HEK293 (cell line): ENCODE measurements at regions of chr14 and their contacts with region 1.

Region 1: GRCh38 chr14:23631702-23632460 is 4.3 kb upstream of the DHRS2 start:
- H3K4me3 ChIP-seq: no peak overlapping the region
- H3K27ac ChIP-seq: no peak overlapping the region
- H3K4me1 ChIP-seq: no peaks in the 10 kb centered on the region
- CTCF ChIP-seq: peak; percentile 77

Region 2: DNA sequence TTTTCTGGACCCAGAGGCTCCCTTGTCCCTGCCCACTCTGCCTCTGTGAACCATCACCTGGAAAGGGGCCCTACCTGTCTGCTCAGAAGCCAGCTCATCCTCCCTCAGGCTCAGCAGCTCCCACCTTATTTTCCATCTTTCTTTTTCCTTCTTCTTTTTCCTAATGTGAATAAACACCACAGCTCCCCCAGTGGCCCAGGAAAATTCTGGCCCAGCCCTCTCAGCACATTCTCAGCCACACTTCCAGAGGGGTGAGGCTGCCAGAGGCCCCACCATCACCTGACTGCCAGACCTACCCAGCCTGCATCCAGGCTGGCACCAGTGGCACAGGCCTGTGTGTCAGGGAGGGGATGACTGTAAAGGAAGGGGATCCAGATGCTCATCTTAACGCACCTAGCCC is 103.3 kb before region 1 on chr14:
- CTCF ChIA-PET with region 1: no interaction called
- POLR2A ChIA-PET with region 1: no interaction called
- H3K4me3 ChIP-seq: no peak overlapping the region
- H3K27ac ChIP-seq: no peak overlapping the region
- H3K4me1 ChIP-seq: no peaks in the 10 kb centered on the region
- CTCF ChIP-seq: 0 out of 2 replicates have a peak, but pooled peaks have one; percentile 33

Region 3: DNA sequence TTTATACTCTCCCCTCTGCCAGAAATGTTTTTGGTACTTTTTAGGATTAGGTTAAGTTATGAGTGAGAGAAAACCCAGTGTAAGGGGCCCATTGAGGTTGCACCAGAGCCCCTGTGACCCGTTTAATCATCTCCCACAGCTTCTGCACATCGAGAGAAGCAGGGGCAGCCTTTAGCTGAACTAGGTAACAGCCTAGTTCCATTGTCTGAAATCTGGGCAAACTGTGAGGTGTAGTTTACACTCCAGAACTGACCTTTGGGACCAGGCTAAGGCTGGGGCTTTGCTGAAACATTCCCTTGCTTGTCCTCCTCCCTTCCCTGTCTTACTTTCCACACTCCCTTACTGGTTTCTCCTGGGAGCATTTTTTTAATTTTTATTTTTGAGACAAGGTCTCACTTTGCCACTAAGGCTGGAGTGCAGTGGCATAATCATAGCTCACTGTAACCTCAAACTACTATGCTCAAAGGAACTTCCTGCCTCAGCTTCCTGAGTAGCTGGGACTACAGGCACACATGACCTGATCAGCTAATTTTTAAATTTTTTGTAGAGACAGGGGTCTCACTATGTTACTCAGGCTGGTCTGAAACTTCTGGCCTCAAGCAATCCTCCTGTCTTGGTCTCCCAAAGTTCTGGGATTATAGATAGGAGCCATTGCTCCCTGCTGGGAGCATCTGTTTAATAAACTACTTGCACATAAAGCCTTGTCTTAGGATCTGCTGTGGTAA is 21.6 kb before region 1 on chr14:
- CTCF ChIA-PET with region 1: interaction called, 21 read pairs
- POLR2A ChIA-PET with region 1: no interaction called
- H3K4me3 ChIP-seq: no peak overlapping the region
- H3K27ac ChIP-seq: no peak overlapping the region
- H3K4me1 ChIP-seq: no peaks in the 10 kb centered on the region
- CTCF ChIP-seq: no peak

Region 4: GRCh38 chr14:23621204-23621931 is 10.5 kb before region 1 on chr14:
- CTCF ChIA-PET with region 1: interaction called, 23 read pairs
- POLR2A ChIA-PET with region 1: no interaction called
- H3K4me3 ChIP-seq: no peak overlapping the region
- H3K27ac ChIP-seq: no peak overlapping the region
- H3K4me1 ChIP-seq: no peaks in the 10 kb centered on the region
- CTCF ChIP-seq: no peak

Region 5: DNA sequence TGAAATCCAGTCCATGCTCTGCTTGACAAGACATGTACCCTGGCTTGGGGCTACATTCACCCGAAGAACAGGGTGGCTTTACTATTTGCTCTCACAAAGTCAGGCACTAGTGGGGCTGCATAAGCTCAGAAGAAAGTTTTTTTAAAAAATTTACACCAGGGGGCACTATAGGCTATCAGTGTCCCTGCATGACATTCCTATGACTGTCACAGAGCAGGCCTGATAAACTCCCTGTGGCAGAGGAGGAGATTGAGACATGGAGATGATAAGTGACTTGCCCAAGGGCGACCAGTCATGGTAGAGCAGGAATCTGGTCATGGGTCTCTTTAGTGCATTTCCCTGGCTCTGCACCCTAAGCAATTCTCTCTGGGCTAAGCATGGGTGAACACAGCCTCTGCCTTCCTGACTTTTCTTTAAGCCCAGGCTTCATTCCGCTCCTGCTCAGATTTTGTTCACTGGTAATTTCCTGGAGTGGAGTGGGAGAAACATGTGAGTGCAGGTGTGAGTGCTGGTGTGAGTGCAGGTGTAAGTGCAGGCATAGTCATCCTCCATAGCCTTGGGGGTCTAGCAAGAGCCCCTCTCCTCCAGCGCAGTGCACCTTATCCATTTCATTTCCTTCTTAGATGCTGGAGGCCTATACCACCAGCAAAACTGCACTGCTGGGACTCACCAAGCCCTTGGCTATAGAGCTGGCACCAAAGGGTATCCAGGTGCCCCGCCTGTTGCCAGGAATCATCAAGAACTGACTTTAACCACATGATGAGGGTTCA is 95.9 kb after region 1 on chr14:
- CTCF ChIA-PET with region 1: interaction called, 28 read pairs
- POLR2A ChIA-PET with region 1: no interaction called
- H3K4me3 ChIP-seq: no peak overlapping the region
- H3K27ac ChIP-seq: no peak overlapping the region
- H3K4me1 ChIP-seq: no peaks in the 10 kb centered on the region
- CTCF ChIP-seq: no peak

Region 6: DNA sequence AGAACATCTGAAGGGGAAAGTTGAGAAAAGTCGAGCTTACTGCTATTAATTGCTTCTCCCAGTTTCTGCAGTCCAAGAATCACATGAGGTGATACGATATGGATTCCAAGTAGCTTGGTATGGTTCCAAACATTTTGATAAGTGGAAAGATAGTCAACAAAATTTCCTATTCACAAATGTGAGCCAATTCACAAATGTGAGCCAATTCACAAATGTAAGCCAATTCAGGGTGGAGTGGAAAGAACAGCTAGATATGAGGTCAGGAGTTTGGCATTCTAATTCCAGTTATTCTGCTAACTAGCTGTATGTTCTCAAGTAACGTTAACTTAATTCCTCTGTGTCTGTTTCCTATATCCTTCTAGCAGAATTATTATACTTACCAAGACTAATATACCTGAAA is 284.1 kb after region 1 on chr14:
- CTCF ChIA-PET with region 1: interaction called, 93 read pairs
- POLR2A ChIA-PET with region 1: no interaction called
- H3K4me3 ChIP-seq: no peak overlapping the region
- H3K27ac ChIP-seq: no peak overlapping the region
- H3K4me1 ChIP-seq: no peaks in the 10 kb centered on the region
- CTCF ChIP-seq: no peak